CD8-positive, alpha-beta memory T cell (primary cell): ENCODE measurements at regions of chr6 and their contacts with region 1.

Region 1: GRCh38 chr6:41027799-41028628 is 11.0 kb downstream of the UNC5CL start:
- DNase-seq: peak; percentile 61 to 78 (median 68)
- H3K4me3 ChIP-seq: peak overlapping the region; percentile 68
- H3K4me3 Mint-ChIP-seq: peak overlapping the region; percentile 79 to 88 (median 83)
- H3K27ac ChIP-seq: peak overlapping the region; percentile 57
- H3K27ac Mint-ChIP-seq: peak overlapping the region in 7 of 8 donors; percentile 67 to 89 (median 83)
- H3K4me1 ChIP-seq: peaks cover 20% of the 10 kb centered on the region
- H3K4me1 Mint-ChIP-seq: peaks cover 20 to 23% (median 21%) of the 10 kb centered on the region in 3 donors
- H3K27me3 ChIP-seq: no peaks in the 10 kb centered on the region
- H3K27me3 Mint-ChIP-seq: no peaks in the 10 kb centered on the region

Region 2: DNA sequence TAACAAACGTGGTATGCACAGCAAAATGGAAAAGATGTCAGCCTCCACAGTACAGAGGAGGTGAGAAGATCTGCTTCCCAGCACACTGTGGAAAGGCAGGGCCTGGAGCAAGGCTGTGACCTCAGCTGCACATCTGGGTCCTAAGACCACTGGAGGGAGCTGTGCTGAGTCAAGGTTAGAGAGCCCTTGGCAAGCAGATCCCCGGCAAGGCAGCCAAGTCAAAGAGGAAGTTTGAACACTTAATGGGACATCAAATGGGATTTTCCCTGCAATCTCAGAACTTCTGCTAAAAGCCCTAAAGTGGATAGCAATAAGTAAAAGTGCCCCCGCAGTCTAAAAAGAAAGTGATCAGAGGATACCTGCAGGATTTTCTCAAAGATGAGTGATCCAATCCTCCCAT is 28.4 kb before region 1 on chr6:
- CTCF ChIA-PET with region 1: interaction called, 13 read pairs
- POLR2A ChIA-PET with region 1: no interaction called
- DNase-seq: no peak
- H3K4me3 ChIP-seq: no peak overlapping the region
- H3K4me3 Mint-ChIP-seq: no peak overlapping the region
- H3K27ac ChIP-seq: no peak overlapping the region
- H3K27ac Mint-ChIP-seq: no peak overlapping the region
- H3K4me1 ChIP-seq: no peaks in the 10 kb centered on the region
- H3K4me1 Mint-ChIP-seq: no peaks in the 10 kb centered on the region
- H3K27me3 ChIP-seq: no peaks in the 10 kb centered on the region
- H3K27me3 Mint-ChIP-seq: peaks cover 39 to 60% of the 10 kb centered on the region in 2 donors

Region 3: DNA sequence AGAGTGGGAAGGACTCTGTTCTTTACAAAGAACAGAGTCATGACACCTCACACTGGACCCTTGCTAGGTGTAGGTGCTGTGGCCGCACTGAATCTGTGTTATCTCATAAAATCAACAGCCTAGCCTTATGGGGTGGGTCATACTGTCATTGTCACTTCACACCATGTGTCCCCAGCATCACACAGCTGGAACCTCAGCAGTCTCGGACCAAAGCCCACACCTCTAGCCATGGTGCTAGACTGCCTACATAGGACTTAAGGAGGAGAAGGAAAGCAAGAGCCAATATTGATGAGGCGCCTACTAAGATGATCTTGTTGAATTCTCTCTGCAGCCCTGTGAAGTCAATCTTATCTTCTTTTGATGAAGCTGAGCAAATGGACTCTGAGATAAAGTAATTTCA is 20.0 kb before region 1 on chr6:
- CTCF ChIA-PET with region 1: interaction called, 28 read pairs
- POLR2A ChIA-PET with region 1: no interaction called
- DNase-seq: no peak
- H3K4me3 ChIP-seq: no peak overlapping the region
- H3K4me3 Mint-ChIP-seq: no peak overlapping the region
- H3K27ac ChIP-seq: no peak overlapping the region
- H3K27ac Mint-ChIP-seq: no peak overlapping the region
- H3K4me1 ChIP-seq: no peaks in the 10 kb centered on the region
- H3K4me1 Mint-ChIP-seq: no peaks in the 10 kb centered on the region
- H3K27me3 ChIP-seq: no peaks in the 10 kb centered on the region
- H3K27me3 Mint-ChIP-seq: peaks cover 19 to 20% of the 10 kb centered on the region in 2 donors

Region 4: DNA sequence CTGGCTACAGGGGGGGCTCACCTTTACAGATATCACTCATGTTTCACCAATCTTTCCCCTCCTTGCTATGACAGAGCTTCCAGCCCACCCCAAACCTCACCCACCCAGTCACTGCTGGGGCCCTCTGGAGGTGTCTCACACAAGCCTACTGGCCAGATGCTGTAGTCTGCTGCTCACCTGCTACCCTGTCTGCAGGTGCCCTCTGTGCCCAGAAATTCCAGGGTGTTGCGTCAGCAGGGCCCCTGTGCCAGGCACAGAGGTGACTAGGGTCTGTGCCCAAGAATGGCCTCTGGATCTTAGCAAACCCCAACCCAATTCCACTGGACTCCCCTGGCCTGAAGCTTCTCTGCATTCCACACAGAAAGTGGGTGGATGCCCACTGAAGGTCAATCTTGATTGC is 10.4 kb before region 1 on chr6:
- CTCF ChIA-PET with region 1: interaction called, 23 read pairs
- POLR2A ChIA-PET with region 1: no interaction called
- DNase-seq: no peak
- H3K4me3 ChIP-seq: no peak overlapping the region
- H3K4me3 Mint-ChIP-seq: no peak overlapping the region
- H3K27ac ChIP-seq: no peak overlapping the region
- H3K27ac Mint-ChIP-seq: peak overlapping the region in 1 of 8 donors; percentile 2
- H3K4me1 ChIP-seq: no peaks in the 10 kb centered on the region
- H3K4me1 Mint-ChIP-seq: no peaks in the 10 kb centered on the region
- H3K27me3 ChIP-seq: no peaks in the 10 kb centered on the region
- H3K27me3 Mint-ChIP-seq: peaks cover 3% of the 10 kb centered on the region in 2 donors

Region 5: DNA sequence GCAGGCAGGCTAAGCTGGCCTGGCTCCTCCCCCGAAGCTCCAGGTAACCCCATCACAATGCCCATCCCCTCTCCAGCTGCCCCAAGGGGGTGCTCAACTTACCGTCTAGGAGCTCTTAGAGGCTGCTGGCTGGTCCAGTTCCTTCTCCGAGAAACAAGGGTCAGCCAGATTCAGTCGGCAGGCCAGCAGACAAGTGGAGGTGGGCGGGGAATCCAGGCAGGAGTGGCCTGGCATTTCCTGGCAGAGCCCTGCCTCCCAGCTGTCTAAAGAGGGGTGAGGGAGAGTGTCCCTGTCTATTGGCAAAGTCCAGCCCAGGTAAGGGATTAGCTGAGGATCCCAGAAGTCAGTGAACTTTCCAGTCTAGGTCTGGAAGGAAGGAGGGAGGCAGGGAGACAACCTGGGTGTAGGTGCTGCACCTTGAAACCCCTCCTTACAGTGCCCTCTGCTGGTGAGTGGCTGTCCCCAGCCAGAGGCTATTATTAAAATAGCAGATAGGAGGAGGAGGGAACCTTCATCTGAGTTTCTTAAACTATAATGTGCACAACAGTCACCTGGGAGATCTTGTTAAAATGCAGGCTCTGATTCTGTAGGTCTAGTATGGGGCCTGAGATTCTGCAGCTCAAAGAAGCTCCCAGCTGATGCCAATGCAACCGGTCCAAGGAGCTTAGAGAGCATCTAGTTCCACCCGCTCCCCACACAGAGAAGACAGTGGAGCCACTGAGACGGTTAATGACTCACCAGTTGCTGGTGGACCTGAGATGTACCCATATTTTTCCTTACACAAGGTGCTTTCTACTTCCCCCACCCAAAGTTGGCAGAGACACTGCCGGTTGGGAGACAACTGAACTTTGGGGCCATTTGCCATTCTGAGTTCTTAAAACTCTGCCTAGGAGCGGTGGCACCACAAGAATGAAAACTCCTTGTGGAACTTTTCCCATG is 11.3 kb after region 1 on chr6 and contains the start of gene UNC5CL:
- CTCF ChIA-PET with region 1: interaction called, 44 read pairs
- POLR2A ChIA-PET with region 1: interaction called, 4 read pairs
- DNase-seq: peak; percentile 18 to 61 (median 24)
- H3K4me3 ChIP-seq: no peak within 1 kb of the TSS
- H3K4me3 Mint-ChIP-seq: peak within 1 kb of the TSS in 1 of 7 donors; percentile 3
- H3K27ac ChIP-seq: no peak within 1 kb of the TSS
- H3K27ac Mint-ChIP-seq: no peak within 1 kb of the TSS
- H3K4me1 ChIP-seq: no peaks in the 10 kb centered on the region
- H3K4me1 Mint-ChIP-seq: no peaks in the 10 kb centered on the region
- H3K27me3 ChIP-seq: no peaks in the 10 kb centered on the region
- H3K27me3 Mint-ChIP-seq: peaks cover 0 to 2% of the 10 kb centered on the region in 2 donors
- total RNA-seq, gene UNC5CL: 1.1 to 1.8 TPM

Region 6: DNA sequence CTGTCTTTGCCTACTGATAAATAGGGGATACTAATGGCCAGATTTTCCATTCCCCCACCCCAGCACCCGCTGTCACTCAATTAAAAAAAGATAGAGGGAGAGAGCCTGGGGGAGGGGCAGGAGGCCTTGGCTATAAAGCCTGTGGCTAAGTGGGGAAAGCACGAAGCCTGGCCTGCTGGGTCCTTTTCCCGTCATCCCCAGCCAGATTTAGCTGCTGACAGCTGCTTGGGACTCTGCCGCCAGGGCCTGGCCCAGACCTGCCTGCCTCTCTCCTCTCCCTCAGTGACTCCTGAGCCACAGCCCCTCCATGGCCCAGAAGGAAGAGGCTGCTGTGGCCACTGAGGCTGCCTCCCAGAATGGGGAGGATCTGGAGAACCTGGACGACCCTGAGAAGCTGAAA is 25.0 kb after region 1 on chr6 and contains the start of gene APOBEC2:
- CTCF ChIA-PET with region 1: interaction called, 22 read pairs
- POLR2A ChIA-PET with region 1: no interaction called
- DNase-seq: no peak
- H3K4me3 ChIP-seq: peak within 1 kb of the TSS; percentile 13
- H3K4me3 Mint-ChIP-seq: peak within 1 kb of the TSS in 5 of 7 donors; percentile 3 to 48 (median 15)
- H3K27ac ChIP-seq: no peak within 1 kb of the TSS
- H3K27ac Mint-ChIP-seq: peak within 1 kb of the TSS in 6 of 8 donors; percentile 4 to 81 (median 56)
- H3K4me1 ChIP-seq: peaks cover 18% of the 10 kb centered on the region
- H3K4me1 Mint-ChIP-seq: peaks cover 14 to 17% (median 14%) of the 10 kb centered on the region in 3 donors
- H3K27me3 ChIP-seq: no peaks in the 10 kb centered on the region
- H3K27me3 Mint-ChIP-seq: no peaks in the 10 kb centered on the region
- total RNA-seq, gene APOBEC2: not detected

Region 7: GRCh38 chr6:41072676-41073623 is 44.9 kb after region 1 on chr6 and contains the start of gene NFYA:
- CTCF ChIA-PET with region 1: interaction called, 12 read pairs
- POLR2A ChIA-PET with region 1: interaction called, 7 read pairs
- DNase-seq: peak; percentile 100
- H3K4me3 ChIP-seq: peak within 1 kb of the TSS; percentile 98
- H3K4me3 Mint-ChIP-seq: peak within 1 kb of the TSS; percentile 89 to 99 (median 95)
- H3K27ac ChIP-seq: peak within 1 kb of the TSS; percentile 94
- H3K27ac Mint-ChIP-seq: peak within 1 kb of the TSS; percentile 96 to 99 (median 98)
- H3K4me1 ChIP-seq: peaks cover 39% of the 10 kb centered on the region
- H3K4me1 Mint-ChIP-seq: peaks cover 46 to 61% (median 57%) of the 10 kb centered on the region in 3 donors
- H3K27me3 ChIP-seq: no peaks in the 10 kb centered on the region
- H3K27me3 Mint-ChIP-seq: peaks cover 0 to 6% of the 10 kb centered on the region in 2 donors
- total RNA-seq, gene NFYA: 34.5 to 34.9 TPM